Naive thymus-derived CD4-positive, alpha-beta T cell (primary cell): ENCODE measurements at regions of chr1 and their contacts with region 1.

Region 1: GRCh38 chr1:53326088-53326597 is 1.7 kb downstream of the LRP8 start:
- DNase-seq: peak; percentile 70 to 96 (median 79)
- ATAC-seq: peak; percentile 93
- H3K4me3 ChIP-seq: peak overlapping the region; percentile 88
- H3K4me3 Mint-ChIP-seq: peak overlapping the region; percentile 89 to 98 (median 94)
- H3K27ac ChIP-seq: peak overlapping the region; percentile 56
- H3K27ac Mint-ChIP-seq: peak overlapping the region; percentile 15 to 96 (median 73)
- H3K4me1 ChIP-seq: peaks cover 5 to 14% of the 10 kb centered on the region in 2 donors
- H3K4me1 Mint-ChIP-seq: peaks cover 6 to 52% (median 12%) of the 10 kb centered on the region in 7 donors
- H3K27me3 ChIP-seq: no peaks in the 10 kb centered on the region
- H3K27me3 Mint-ChIP-seq: no peaks in the 10 kb centered on the region

Region 2: GRCh38 chr1:52702886-52703787 is 623.0 kb before region 1 on chr1:
- CTCF ChIA-PET with region 1: no interaction called
- POLR2A ChIA-PET with region 1: no interaction called
- intact Hi-C with region 1: loop called in 1 of 2 experiments (anchors 10 kb)
- DNase-seq: peak; percentile 62 to 89 (median 83)
- ATAC-seq: peak; percentile 95
- H3K4me3 ChIP-seq: peak overlapping the region; percentile 52
- H3K4me3 Mint-ChIP-seq: peak overlapping the region; percentile 75 to 96 (median 92)
- H3K27ac ChIP-seq: peak overlapping the region; percentile 83
- H3K27ac Mint-ChIP-seq: peak overlapping the region; percentile 97 to 99 (median 99)
- H3K4me1 ChIP-seq: peaks cover 6% of the 10 kb centered on the region in 2 donors
- H3K4me1 Mint-ChIP-seq: peaks cover 21 to 46% (median 32%) of the 10 kb centered on the region in 7 donors
- H3K27me3 ChIP-seq: no peaks in the 10 kb centered on the region
- H3K27me3 Mint-ChIP-seq: peaks cover 0 to 12% (median 0%) of the 10 kb centered on the region in 5 donors

Region 3: DNA sequence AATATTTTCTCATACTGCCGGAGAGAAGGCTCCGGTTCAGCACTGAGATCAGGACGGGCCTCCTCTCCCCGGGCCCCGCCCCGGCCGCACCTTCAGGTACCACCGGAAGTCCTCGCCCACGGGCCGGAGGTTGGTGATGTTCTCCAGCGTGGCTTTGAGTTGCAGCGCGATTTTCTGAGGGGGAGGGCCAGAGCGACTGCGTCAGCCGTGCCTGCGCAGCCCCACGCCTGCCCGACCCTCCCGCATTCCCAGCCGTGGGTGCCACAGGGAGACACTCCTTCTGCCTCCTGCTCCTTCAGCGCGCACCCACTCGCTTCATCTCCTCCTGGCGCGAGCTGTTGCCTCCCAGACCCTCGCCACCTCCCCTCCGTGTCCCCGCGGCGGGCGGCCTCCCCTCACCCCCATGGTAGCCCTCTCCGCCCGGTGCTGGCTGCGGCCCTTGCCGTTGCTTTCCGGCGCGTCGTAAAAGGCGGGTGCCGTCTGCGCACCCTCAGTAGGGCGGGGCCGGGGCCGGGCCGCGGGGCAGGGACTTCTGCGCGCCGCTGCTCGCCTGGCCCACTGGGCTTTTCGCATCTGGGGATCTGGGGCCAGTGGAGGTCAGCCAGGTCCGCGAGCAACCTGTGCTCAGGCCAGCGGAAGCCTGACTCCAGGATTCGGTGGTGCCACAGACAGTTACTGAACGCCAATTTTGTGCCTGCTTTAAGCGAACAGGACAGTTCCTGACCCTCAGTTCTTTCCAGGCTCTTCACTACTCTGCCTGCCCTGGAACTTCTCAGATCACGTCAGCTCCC is 105.8 kb before region 1 on chr1 and contains the start of gene CZIB:
- CTCF ChIA-PET with region 1: no interaction called
- POLR2A ChIA-PET with region 1: interaction called, 3 read pairs
- intact Hi-C with region 1: loop called in 1 of 2 experiments (anchors 1 kb)
- DNase-seq: peak; percentile 85 to 97 (median 92)
- ATAC-seq: peak; percentile 97
- H3K4me3 ChIP-seq: peak within 1 kb of the TSS; percentile 80
- H3K4me3 Mint-ChIP-seq: peak within 1 kb of the TSS; percentile 83 to 94 (median 92)
- H3K27ac ChIP-seq: peak within 1 kb of the TSS; percentile 99
- H3K27ac Mint-ChIP-seq: peak within 1 kb of the TSS; percentile 91 to 98 (median 96)
- H3K4me1 ChIP-seq: peaks cover 15% of the 10 kb centered on the region in 2 donors
- H3K4me1 Mint-ChIP-seq: peaks cover 15 to 31% (median 26%) of the 10 kb centered on the region in 7 donors
- H3K27me3 ChIP-seq: no peaks in the 10 kb centered on the region
- H3K27me3 Mint-ChIP-seq: no peaks in the 10 kb centered on the region
- total RNA-seq, gene CZIB: 41.9 to 94.9 (median 51.4) TPM

Region 4: GRCh38 chr1:53278201-53278725 is 47.9 kb before region 1 on chr1:
- CTCF ChIA-PET with region 1: interaction called, 3 read pairs
- POLR2A ChIA-PET with region 1: no interaction called
- intact Hi-C with region 1: loop called (anchors 1 to 5 kb)
- DNase-seq: peak; percentile 31 to 74 (median 62)
- ATAC-seq: peak; percentile 76
- H3K4me3 ChIP-seq: no peak overlapping the region
- H3K4me3 Mint-ChIP-seq: no peak overlapping the region
- H3K27ac ChIP-seq: no peak overlapping the region
- H3K27ac Mint-ChIP-seq: peak overlapping the region in 1 of 9 donors; percentile 71
- H3K4me1 ChIP-seq: no peaks in the 10 kb centered on the region
- H3K4me1 Mint-ChIP-seq: peaks cover 0 to 2% (median 0%) of the 10 kb centered on the region in 7 donors
- H3K27me3 ChIP-seq: no peaks in the 10 kb centered on the region
- H3K27me3 Mint-ChIP-seq: no peaks in the 10 kb centered on the region

Region 5: DNA sequence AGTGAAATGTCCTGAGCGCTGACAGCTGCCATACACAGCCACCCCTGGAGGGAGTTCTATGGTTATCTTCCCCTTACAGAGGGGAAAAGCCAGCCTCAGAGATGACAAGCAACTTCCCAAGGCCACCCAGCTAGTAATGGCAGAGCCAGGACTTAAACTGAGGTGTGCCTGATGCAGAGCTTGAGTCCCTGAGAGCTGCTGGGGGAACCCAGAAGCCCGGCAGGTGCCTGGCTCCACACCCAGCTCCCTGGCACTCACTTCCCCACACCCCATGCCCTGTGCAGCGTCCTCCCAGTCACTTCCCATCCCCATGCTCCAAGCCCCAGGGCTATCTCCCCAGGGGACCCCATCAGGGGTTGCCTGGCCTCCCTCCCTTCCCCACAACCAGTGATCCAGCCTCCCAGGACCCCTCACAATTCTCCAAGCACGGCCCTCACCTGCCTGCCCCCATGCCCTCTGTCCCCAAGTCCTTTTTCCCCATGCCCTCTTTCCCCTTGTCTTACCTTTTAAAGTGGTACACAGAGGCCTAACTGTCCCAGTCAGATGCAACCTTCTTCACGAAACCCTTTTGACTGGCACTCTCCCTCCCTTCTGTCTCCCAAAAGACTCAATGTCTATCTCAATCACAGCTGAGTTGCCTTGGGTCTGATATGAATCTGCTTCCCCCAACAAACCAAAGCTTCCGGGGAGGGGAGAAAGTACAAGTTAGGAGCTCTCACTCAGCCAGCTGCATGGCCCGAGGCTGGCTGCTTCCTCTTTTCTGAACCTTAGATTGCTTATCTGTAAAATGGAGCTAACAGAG is 41.6 kb after region 1 on chr1:
- CTCF ChIA-PET with region 1: no interaction called
- POLR2A ChIA-PET with region 1: interaction called, 7 read pairs
- intact Hi-C with region 1: loop called (anchors 1 kb)
- DNase-seq: peak in 6 of 9 donors; percentile 18 to 42 (median 36)
- ATAC-seq: peak; percentile 65
- H3K4me3 ChIP-seq: peak overlapping the region; percentile 43
- H3K4me3 Mint-ChIP-seq: peak overlapping the region; percentile 83 to 96 (median 92)
- H3K27ac ChIP-seq: peak overlapping the region; percentile 40
- H3K27ac Mint-ChIP-seq: peak overlapping the region; percentile 83 to 97 (median 91)
- H3K4me1 ChIP-seq: peaks cover 9 to 15% of the 10 kb centered on the region in 2 donors
- H3K4me1 Mint-ChIP-seq: peaks cover 24 to 39% (median 27%) of the 10 kb centered on the region in 7 donors
- H3K27me3 ChIP-seq: no peaks in the 10 kb centered on the region
- H3K27me3 Mint-ChIP-seq: peaks cover 0 to 3% (median 0%) of the 10 kb centered on the region in 5 donors

Region 6: DNA sequence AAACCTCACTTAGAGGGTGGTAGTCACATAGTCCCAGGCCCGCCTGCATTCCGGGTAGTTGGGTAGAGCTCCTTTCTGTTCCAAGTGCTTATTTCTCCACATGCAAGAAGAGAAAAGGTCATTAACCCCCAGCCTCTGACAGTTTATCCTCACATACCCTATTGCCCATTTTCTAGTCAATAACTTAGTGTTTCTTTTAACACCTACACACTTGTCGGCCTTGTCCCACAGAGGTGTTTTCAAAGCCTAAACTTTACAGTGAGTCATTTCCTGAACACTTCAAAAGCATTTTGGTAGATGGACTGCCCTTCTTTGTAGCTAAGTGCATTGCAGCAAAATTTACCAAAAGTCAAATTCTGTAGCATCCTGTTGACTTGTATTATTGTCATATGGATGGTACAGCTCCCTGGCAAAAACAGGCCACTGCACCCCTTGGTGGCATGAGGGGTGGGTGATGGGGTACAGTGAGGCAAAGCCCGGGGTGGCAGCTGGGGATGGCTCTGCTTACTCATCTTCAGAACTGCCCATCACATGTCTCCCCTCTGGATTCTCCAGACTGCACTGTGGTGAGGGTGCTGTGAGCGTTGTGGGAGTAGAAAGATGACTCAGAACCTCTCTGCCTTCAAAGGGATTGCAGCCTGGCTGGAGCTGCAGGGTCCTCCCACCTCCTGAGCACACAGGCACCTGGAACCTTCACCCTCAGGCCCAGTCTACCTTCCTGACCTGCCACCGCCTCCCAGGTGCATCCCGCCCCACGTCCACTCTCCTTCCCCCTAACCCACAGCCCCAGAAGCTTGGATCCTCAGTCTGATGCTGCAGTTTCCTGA is 87.2 kb after region 1 on chr1:
- CTCF ChIA-PET with region 1: no interaction called
- POLR2A ChIA-PET with region 1: no interaction called
- intact Hi-C with region 1: loop called in 1 of 2 experiments (anchors 1 kb)
- DNase-seq: peak in 6 of 9 donors; percentile 10 to 75 (median 32)
- ATAC-seq: peak; percentile 81
- H3K4me3 ChIP-seq: peak overlapping the region; percentile 5
- H3K4me3 Mint-ChIP-seq: peak overlapping the region in 7 of 10 donors; percentile 10 to 83 (median 30)
- H3K27ac ChIP-seq: peak overlapping the region; percentile 5
- H3K27ac Mint-ChIP-seq: peak overlapping the region; percentile 55 to 99 (median 84)
- H3K4me1 ChIP-seq: peaks cover 19 to 66% of the 10 kb centered on the region in 2 donors
- H3K4me1 Mint-ChIP-seq: peaks cover 19 to 72% (median 27%) of the 10 kb centered on the region in 7 donors
- H3K27me3 ChIP-seq: no peaks in the 10 kb centered on the region
- H3K27me3 Mint-ChIP-seq: peaks cover 0 to 9% (median 0%) of the 10 kb centered on the region in 5 donors

Region 7: DNA sequence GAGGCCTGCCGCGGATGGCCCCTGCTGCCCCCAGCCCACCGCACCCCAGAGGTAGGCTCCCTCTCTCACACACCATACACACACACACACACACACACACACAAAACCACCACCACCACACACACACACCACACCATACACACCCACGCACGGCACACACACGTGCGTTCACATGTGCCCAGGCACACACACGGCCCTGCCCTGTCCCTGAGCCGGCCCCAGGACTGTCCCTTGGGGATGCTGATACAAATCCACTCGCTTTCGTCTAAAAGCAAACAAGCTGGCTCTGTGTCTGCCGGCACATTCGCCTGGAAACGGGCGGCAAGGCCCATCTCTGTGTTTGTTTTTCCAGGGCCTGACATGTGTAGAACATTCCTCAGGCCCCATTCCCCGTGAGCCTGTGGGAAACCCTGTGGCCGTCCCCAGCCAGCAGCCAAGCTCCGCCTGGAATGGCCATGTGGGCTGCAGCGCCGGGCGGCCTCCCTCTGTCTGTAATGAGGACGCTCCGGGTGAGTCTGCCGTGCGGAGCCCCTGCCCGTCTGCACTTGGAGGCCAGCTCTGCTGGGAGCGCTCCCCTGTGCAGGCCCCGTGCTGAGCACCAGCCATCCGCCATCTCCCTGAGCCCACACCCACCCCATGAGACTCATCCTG is 200.4 kb after region 1 on chr1:
- CTCF ChIA-PET with region 1: no interaction called
- POLR2A ChIA-PET with region 1: no interaction called
- intact Hi-C with region 1: no loop called
- DNase-seq: no peak
- ATAC-seq: peak; percentile 21
- H3K4me3 ChIP-seq: no peak overlapping the region
- H3K4me3 Mint-ChIP-seq: no peak overlapping the region
- H3K27ac ChIP-seq: no peak overlapping the region
- H3K27ac Mint-ChIP-seq: no peak overlapping the region
- H3K4me1 ChIP-seq: no peaks in the 10 kb centered on the region
- H3K4me1 Mint-ChIP-seq: no peaks in the 10 kb centered on the region
- H3K27me3 ChIP-seq: no peaks in the 10 kb centered on the region
- H3K27me3 Mint-ChIP-seq: no peaks in the 10 kb centered on the region

Region 8: GRCh38 chr1:53562291-53562980 is 236.3 kb after region 1 on chr1:
- CTCF ChIA-PET with region 1: no interaction called
- POLR2A ChIA-PET with region 1: no interaction called
- intact Hi-C with region 1: no loop called
- DNase-seq: peak in 1 of 9 donors; percentile 54
- ATAC-seq: peak; percentile 55
- H3K4me3 ChIP-seq: no peak overlapping the region
- H3K4me3 Mint-ChIP-seq: peak overlapping the region in 8 of 10 donors; percentile 15 to 69 (median 56)
- H3K27ac ChIP-seq: no peak overlapping the region
- H3K27ac Mint-ChIP-seq: no peak overlapping the region
- H3K4me1 ChIP-seq: no peaks in the 10 kb centered on the region
- H3K4me1 Mint-ChIP-seq: peaks cover 9 to 24% (median 21%) of the 10 kb centered on the region in 7 donors
- H3K27me3 ChIP-seq: no peaks in the 10 kb centered on the region
- H3K27me3 Mint-ChIP-seq: peaks cover 27 to 44% (median 36%) of the 10 kb centered on the region in 5 donors

Region 9: DNA sequence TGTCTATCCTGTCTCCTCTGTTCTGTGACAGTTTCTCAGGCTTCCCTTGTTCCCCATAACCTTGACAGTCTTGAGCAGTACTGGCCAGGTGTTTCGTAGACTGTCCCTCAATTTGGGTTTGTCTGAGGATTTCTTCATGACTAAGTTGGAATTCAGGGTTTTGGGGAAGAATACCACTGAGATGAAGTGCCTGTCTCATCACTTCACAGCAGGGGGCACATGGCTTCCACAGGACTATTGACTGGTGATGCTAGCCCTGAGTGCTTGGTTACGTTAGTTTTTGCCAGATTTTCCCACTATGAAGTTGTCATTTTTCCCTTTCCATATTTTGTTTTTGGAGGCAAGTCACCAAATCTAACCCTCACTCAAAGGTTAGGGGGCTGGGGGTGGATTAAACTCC is 781.0 kb after region 1 on chr1:
- CTCF ChIA-PET with region 1: no interaction called
- POLR2A ChIA-PET with region 1: no interaction called
- intact Hi-C with region 1: no loop called
- DNase-seq: no peak
- ATAC-seq: no peak
- H3K4me3 ChIP-seq: no peak overlapping the region
- H3K4me3 Mint-ChIP-seq: no peak overlapping the region
- H3K27ac ChIP-seq: no peak overlapping the region
- H3K27ac Mint-ChIP-seq: no peak overlapping the region
- H3K4me1 ChIP-seq: no peaks in the 10 kb centered on the region
- H3K4me1 Mint-ChIP-seq: no peaks in the 10 kb centered on the region
- H3K27me3 ChIP-seq: no peaks in the 10 kb centered on the region
- H3K27me3 Mint-ChIP-seq: no peaks in the 10 kb centered on the region

Region 10: DNA sequence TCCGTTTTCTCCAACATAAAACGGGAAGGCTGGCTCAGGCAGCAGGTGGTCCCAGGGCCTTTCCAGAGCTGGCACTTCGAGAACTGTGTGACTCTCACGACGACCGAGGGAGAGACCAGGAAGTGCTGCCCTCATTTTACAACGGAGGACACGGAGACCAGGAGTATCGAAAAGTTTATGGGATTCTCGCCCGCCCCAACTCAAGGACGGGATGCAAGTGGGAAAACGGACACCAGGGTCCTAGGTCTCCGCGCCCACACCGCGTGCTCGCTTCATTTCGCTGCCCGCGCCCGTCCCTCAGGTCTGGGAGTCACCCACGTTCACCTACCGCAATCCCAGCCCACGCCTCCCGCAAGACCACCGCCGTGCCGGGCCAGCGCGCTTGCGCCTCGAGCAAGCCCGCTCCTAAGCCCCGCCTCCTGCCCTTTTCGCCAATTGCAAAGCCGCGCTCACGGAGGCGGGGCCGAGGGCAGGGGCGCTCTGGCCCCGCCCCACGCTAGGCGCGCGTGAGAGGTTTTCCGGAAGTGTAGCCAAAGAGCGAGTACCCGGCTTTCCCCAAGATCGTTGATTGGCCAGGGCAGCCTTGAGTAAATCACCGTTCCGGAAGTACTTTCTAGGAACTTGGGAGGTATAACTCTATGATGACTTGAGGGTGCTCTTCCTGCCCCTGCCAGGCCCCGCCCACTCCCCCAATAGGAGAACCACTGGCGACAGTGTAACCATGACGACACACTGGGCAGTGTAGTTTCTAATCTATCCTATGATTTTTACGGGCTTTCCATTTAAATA is 1438.2 kb after region 1 on chr1 and contains the start of gene PARS2:
- CTCF ChIA-PET with region 1: no interaction called
- POLR2A ChIA-PET with region 1: no interaction called
- intact Hi-C with region 1: loop called (anchors 1 to 2 kb)
- DNase-seq: peak; percentile 89 to 98 (median 97)
- ATAC-seq: peak; percentile 96
- H3K4me3 ChIP-seq: peak within 1 kb of the TSS; percentile 95
- H3K4me3 Mint-ChIP-seq: peak within 1 kb of the TSS; percentile 94 to 97 (median 96)
- H3K27ac ChIP-seq: peak within 1 kb of the TSS; percentile 83
- H3K27ac Mint-ChIP-seq: peak within 1 kb of the TSS; percentile 81 to 97 (median 93)
- H3K4me1 ChIP-seq: peaks cover 0 to 9% of the 10 kb centered on the region in 2 donors
- H3K4me1 Mint-ChIP-seq: peaks cover 14 to 26% (median 24%) of the 10 kb centered on the region in 7 donors
- H3K27me3 ChIP-seq: no peaks in the 10 kb centered on the region
- H3K27me3 Mint-ChIP-seq: no peaks in the 10 kb centered on the region
- total RNA-seq, gene PARS2: 0.66 to 7.6 (median 4.7) TPM